PC-3 (cell line): ENCODE measurements at regions of chr11 and their contacts with region 1.

Region 1: GRCh38 chr11:88552377-88553062 is 215.0 kb upstream of the CTSC start:
- DNase-seq: peak; percentile 87
- ATAC-seq: peak; percentile 24; the same call in 1 of the 2 replicates
- H3K4me3 ChIP-seq: no peak overlapping the region
- H3K27ac ChIP-seq: no peak overlapping the region; the same call in 1 of the 2 replicates
- H3K4me1 ChIP-seq: peaks cover 38% of the 10 kb centered on the region
- H3K27me3 ChIP-seq: no peaks in the 10 kb centered on the region
- CTCF ChIP-seq: peak; percentile 98

Region 2: GRCh38 chr11:88357323-88358039 is 195.0 kb before region 1 on chr11:
- CTCF ChIA-PET with region 1: no interaction called
- POLR2A ChIA-PET with region 1: no interaction called
- intact Hi-C with region 1: loop called (anchors 1 kb)
- DNase-seq: peak; percentile 87
- ATAC-seq: peak; percentile 96
- H3K4me3 ChIP-seq: peak overlapping the region; percentile 15; the same call in 1 of the 2 replicates
- H3K27ac ChIP-seq: peak overlapping the region; percentile 94
- H3K4me1 ChIP-seq: peaks cover 31% of the 10 kb centered on the region
- H3K27me3 ChIP-seq: no peaks in the 10 kb centered on the region
- CTCF ChIP-seq: no peak

Region 3: GRCh38 chr11:88603091-88603867 is 50.8 kb after region 1 on chr11:
- CTCF ChIA-PET with region 1: no interaction called
- POLR2A ChIA-PET with region 1: no interaction called
- intact Hi-C with region 1: no loop called
- DNase-seq: no peak
- ATAC-seq: no peak
- H3K4me3 ChIP-seq: no peak overlapping the region
- H3K27ac ChIP-seq: no peak overlapping the region
- H3K4me1 ChIP-seq: no peaks in the 10 kb centered on the region
- H3K27me3 ChIP-seq: no peaks in the 10 kb centered on the region
- CTCF ChIP-seq: no peak

Region 4: DNA sequence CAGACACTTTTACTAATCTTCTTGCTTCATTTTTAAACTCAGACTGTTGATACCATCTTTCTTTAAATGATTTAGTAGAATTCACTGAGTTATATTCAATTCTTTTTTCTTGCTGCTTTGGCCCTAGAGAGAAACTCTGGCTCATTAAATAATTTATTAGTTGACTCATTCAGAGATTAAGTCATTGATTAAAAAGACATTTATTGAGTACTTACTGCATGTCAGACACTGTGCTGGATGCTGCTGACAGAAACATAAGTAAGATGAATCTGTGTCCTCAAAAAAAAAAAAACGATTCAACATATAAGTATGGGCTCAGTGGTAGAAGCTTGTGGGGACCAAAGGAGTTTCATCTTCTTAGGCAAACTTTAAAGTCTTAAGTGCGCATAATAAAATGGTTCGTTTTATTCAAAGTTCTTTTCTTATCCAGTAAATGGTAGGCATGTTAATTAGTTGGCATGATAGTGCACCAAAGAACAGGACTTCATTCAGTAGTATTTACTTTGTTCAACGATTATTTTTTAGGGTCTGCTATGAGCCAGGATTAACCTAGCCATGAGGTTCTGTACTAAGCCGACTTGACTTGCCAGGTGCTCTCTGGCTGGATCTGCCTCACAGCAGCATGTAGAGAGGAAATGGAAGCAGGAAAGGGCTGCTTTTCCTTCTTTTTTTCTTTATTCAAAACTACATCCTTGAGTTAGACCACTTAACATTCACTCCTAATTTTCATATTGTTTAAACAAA is 66.0 kb after region 1 on chr11:
- CTCF ChIA-PET with region 1: no interaction called
- POLR2A ChIA-PET with region 1: no interaction called
- intact Hi-C with region 1: loop called (anchors 1 kb)
- DNase-seq: no peak
- ATAC-seq: peak; percentile 72
- H3K4me3 ChIP-seq: no peak overlapping the region
- H3K27ac ChIP-seq: no peak overlapping the region
- H3K4me1 ChIP-seq: peaks cover 9% of the 10 kb centered on the region; the same call in 1 of the 2 replicates
- H3K27me3 ChIP-seq: no peaks in the 10 kb centered on the region
- CTCF ChIP-seq: no peak

Region 5: GRCh38 chr11:88695689-88696414 is 143.3 kb after region 1 on chr11:
- CTCF ChIA-PET with region 1: no interaction called
- POLR2A ChIA-PET with region 1: no interaction called
- intact Hi-C with region 1: no loop called
- DNase-seq: no peak
- ATAC-seq: no peak
- H3K4me3 ChIP-seq: no peak overlapping the region
- H3K27ac ChIP-seq: no peak overlapping the region
- H3K4me1 ChIP-seq: no peaks in the 10 kb centered on the region
- H3K27me3 ChIP-seq: no peaks in the 10 kb centered on the region
- CTCF ChIP-seq: no peak

Region 6: DNA sequence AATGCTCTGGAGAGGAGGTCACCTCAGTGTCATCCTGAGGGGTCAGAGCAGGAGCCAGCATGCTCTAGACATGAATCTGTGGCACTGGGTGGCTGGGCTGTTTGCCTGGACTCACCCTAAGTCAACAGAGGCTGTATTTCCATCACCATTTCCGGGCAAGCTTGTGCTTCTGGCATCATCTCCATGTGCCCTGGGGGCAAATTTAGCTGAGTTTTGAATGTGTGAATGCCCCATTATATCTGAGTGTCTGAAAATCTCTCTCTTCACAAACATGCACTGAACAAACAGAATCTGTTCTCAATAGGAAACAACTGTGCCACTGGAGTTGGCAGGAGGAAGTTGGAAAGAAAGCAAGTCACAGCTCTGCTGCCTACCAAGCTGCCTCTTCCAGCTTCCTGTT is 157.0 kb after region 1 on chr11:
- CTCF ChIA-PET with region 1: no interaction called
- POLR2A ChIA-PET with region 1: no interaction called
- intact Hi-C with region 1: loop called (anchors 1 kb)
- DNase-seq: peak; percentile 87
- ATAC-seq: peak; percentile 93
- H3K4me3 ChIP-seq: no peak overlapping the region
- H3K27ac ChIP-seq: peak overlapping the region; percentile 51
- H3K4me1 ChIP-seq: peaks cover 15% of the 10 kb centered on the region
- H3K27me3 ChIP-seq: no peaks in the 10 kb centered on the region
- CTCF ChIP-seq: no peak

Region 7: GRCh38 chr11:88849368-88849767 is 296.8 kb after region 1 on chr11:
- CTCF ChIA-PET with region 1: no interaction called
- POLR2A ChIA-PET with region 1: interaction called, 5 read pairs
- intact Hi-C with region 1: loop called (anchors 1 kb)
- DNase-seq: peak; percentile 97
- ATAC-seq: peak; percentile 89
- H3K4me3 ChIP-seq: no peak overlapping the region
- H3K27ac ChIP-seq: peak overlapping the region; percentile 83
- H3K4me1 ChIP-seq: peaks cover 25% of the 10 kb centered on the region
- H3K27me3 ChIP-seq: no peaks in the 10 kb centered on the region
- CTCF ChIP-seq: no peak

Region 8: DNA sequence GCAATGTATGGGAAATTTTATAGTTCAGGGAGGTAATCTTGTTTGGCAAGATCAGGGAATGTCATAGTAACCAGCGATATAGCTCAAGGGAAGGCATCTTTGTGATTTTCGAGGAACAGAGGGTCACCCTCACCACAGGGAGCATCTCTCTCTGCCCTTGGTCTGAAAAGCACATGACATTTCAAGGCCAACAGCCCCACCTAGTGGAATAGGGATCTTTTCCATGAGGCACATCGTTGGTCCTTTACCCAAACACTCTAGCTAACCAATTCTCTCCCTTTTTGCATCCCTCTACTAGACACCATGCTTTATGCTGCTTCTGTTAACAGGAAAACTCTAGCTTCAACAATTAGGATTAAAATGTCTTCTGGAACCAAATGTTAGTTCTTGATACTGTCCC is 334.3 kb after region 1 on chr11:
- CTCF ChIA-PET with region 1: interaction called, 6 read pairs
- POLR2A ChIA-PET with region 1: interaction called, 3 read pairs
- intact Hi-C with region 1: loop called (anchors 1 kb)
- DNase-seq: peak; percentile 94
- ATAC-seq: peak; percentile 99
- H3K4me3 ChIP-seq: no peak overlapping the region
- H3K27ac ChIP-seq: no peak overlapping the region
- H3K4me1 ChIP-seq: no peaks in the 10 kb centered on the region
- H3K27me3 ChIP-seq: no peaks in the 10 kb centered on the region
- CTCF ChIP-seq: peak; percentile 87

Region 9: GRCh38 chr11:89613911-89614310 is 1061.4 kb after region 1 on chr11:
- CTCF ChIA-PET with region 1: no interaction called
- POLR2A ChIA-PET with region 1: no interaction called
- intact Hi-C with region 1: loop called (anchors 10 kb)
- DNase-seq: no peak
- ATAC-seq: no peak
- H3K4me3 ChIP-seq: no peak overlapping the region
- H3K27ac ChIP-seq: no peak overlapping the region
- H3K4me1 ChIP-seq: no peaks in the 10 kb centered on the region
- H3K27me3 ChIP-seq: no peaks in the 10 kb centered on the region
- CTCF ChIP-seq: no peak